Heart left ventricle (tissue), 16 donors: ENCODE measurements at regions of chr17 and their contacts with region 1.

Region 1: DNA sequence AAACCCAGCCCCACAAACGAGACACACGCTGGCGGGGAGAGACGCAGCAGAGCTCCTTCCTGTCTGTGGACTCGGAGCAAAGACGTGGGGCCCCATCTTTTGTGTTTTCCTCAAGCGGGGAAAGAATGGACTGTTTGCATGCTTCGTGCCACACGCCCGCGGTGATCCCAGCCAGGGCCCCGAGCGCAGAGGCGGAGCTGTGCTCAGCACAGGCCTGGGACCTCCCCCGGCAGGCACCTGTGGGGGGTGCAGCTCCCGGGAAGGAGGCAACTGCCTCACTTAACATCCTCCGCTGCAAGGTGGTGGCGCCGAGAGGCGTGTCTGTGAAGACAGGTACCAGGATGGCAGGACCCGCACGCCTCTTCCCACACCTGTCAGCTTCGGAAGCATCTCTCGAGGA is 19.1 kb downstream of the TRARG1 start:
- DNase-seq: no peak
- ATAC-seq: no peak
- H3K4me3 ChIP-seq: no peak overlapping the region
- H3K27ac ChIP-seq: no peak overlapping the region
- H3K4me1 ChIP-seq: peaks cover 0 to 13% (median 0%) of the 10 kb centered on the region in 12 donors
- H3K27me3 ChIP-seq: peaks cover 0 to 37% (median 15%) of the 10 kb centered on the region in 9 donors
- CTCF ChIP-seq: no peak
- POLR2A ChIP-seq: no peak

Region 2: DNA sequence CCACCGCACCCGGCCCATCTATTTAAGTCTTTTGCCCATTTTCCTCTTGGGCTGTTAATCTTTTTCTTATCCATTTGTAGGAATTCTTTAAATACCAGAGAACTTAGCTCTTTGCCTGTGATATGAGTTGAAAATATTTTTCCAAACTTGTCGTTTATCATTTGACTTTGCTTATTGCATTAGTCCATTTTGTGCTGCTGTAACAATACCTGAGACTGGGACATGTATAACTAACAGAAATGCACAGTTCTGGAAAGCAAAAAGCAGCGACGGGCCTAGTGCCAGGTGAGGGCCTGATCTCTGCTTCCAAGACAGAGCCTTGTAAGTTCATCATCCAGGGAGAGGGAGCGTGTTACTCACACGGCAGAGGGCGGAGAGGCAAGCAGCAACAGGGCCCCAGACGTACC is 54.0 kb before region 1 on chr17:
- intact Hi-C with region 1: loop called in 1 of 10 experiments (anchors 2 kb)
- DNase-seq: no peak
- ATAC-seq: no peak
- H3K4me3 ChIP-seq: no peak overlapping the region
- H3K27ac ChIP-seq: no peak overlapping the region
- H3K4me1 ChIP-seq: no peaks in the 10 kb centered on the region
- H3K27me3 ChIP-seq: no peaks in the 10 kb centered on the region
- CTCF ChIP-seq: no peak
- POLR2A ChIP-seq: no peak

Region 3: DNA sequence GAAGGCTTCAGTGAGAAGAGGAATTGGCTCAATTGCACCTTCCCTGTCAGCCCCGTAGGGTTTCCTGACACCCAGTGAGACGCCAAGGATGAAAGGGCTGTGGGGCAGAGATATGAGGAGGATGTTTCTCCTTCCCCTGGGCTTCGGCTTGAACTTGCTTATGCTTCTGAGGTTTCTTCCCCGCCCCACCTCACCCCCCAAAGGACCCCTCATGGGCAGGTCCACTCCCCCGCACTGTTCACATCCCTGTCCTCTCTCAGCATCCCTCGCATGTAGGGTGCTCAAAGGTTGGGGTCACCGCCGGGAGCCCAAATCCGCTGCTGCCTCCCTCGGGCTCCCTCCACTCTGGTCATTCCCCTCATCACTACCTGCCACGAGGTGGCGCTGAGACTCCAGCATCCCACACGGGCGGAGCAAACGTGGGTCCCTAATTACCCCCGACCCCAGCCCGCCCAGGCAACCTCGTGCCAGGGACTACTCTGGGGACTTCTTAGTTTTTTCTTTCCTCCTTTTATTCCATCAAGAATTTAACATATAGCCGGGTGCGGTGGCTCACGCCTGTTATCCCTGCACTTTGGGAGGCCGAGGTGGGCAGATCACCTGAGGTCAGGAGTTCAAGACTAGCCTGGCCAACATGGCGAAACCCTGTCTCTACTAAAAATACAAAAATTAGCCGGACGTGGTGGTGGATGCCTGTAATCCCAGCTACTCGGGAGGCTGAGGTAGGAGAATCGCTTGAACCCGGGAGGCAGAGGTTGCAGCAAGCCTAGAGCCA is 22.5 kb before region 1 on chr17:
- intact Hi-C with region 1: loop called in 1 of 10 experiments (anchors 2 kb)
- DNase-seq: peak; percentile 48 to 85 (median 62)
- ATAC-seq: peak; percentile 72 to 83 (median 77)
- H3K4me3 ChIP-seq: no peak overlapping the region
- H3K27ac ChIP-seq: no peak overlapping the region
- H3K4me1 ChIP-seq: peaks cover 0 to 8% (median 0%) of the 10 kb centered on the region in 12 donors
- H3K27me3 ChIP-seq: peaks cover 0 to 24% (median 9%) of the 10 kb centered on the region in 9 donors
- CTCF ChIP-seq: peak; percentile 72 to 88 (median 80)
- POLR2A ChIP-seq: no peak